Activated CD4-positive, alpha-beta memory T cell treated with anti-CD3 and anti-CD28 coated beads for 36 hours (primary cell): ENCODE measurements at regions of chrX and their contacts with region 1.

Region 1: DNA sequence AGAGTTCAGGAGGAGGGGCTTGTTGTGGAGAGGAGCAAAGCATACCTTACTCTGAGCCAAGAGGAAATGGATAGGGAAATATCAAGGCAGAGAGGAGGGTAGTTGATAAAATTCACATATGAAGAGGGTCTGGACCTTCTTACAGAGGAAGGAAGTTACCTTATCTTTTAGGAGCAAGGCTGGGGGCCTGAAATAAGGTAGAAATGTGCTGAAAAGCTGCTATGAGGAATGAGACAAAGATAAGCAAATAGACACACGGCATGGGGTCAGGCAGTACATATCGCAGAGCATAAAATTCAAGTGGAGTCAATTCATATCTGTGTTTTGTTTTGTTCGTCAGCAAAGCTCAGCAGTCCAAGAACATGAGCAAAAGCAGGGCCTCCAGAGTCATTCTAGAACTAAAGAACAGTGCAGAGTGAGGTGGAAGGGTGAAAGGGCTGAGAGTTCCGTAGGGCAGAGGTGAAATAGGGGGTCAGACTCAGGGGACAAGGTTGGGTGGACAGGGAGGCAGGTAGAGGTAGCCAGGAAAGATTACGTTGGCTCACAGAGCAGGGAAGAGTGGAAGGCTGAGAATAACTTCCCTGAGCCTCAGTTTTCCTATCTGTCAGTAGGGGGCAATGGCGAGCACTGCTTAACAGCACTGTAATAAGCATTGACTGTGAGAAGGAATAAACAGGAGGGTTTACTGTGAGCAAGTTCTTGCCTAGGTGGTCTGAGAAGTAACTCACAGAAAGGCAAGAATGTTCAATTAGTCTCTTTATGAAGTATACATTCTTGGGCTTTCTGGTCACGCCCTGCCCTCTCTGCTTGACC is 9.2 kb downstream of the VSIG4 start:
- DNase-seq: peak; percentile 29
- H3K4me3 Mint-ChIP-seq: no peak overlapping the region
- H3K27ac Mint-ChIP-seq: no peak overlapping the region
- H3K4me1 Mint-ChIP-seq: no peaks in the 10 kb centered on the region
- H3K27me3 Mint-ChIP-seq: no peaks in the 10 kb centered on the region

Region 2: DNA sequence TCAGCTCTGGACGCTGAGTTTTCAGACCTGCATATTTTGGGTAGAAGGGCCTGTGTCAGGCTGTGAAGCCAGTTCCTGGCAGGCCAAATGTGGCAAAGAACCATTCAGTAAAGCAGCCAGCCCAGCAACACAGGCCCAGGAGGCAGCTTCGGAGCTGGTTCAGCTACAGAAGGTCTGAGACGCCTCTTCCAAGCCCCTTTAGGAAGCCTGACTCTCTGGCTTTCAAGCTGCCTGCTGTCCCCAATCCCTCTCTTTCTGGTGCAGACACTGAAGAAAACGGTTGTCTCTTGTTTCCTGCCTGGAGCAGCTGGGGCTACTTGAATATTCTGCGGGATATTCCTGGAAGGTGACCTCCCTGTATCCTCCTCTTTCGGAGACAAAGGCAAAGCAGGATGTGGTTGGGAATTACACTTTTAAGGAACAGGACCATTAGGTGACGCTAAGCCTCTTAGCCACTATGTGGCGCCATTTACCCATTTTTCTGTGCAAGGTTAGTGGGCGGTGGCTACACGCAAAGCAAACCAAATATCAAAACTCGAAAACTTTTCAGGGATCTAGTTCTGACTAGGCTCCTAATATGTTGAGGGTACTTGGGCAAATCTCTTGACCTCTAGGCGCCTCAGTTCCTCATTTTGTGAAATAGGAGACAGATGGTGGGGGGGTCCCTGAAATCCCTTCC is 448.9 kb before region 1 on chrX:
- CTCF ChIA-PET with region 1: interaction called, 14 read pairs
- POLR2A ChIA-PET with region 1: no interaction called
- intact Hi-C with region 1: no loop called
- DNase-seq: peak; percentile 63
- H3K4me3 Mint-ChIP-seq: no peak overlapping the region
- H3K27ac Mint-ChIP-seq: no peak overlapping the region
- H3K4me1 Mint-ChIP-seq: peaks cover 3% of the 10 kb centered on the region
- H3K27me3 Mint-ChIP-seq: no peaks in the 10 kb centered on the region

Region 3: DNA sequence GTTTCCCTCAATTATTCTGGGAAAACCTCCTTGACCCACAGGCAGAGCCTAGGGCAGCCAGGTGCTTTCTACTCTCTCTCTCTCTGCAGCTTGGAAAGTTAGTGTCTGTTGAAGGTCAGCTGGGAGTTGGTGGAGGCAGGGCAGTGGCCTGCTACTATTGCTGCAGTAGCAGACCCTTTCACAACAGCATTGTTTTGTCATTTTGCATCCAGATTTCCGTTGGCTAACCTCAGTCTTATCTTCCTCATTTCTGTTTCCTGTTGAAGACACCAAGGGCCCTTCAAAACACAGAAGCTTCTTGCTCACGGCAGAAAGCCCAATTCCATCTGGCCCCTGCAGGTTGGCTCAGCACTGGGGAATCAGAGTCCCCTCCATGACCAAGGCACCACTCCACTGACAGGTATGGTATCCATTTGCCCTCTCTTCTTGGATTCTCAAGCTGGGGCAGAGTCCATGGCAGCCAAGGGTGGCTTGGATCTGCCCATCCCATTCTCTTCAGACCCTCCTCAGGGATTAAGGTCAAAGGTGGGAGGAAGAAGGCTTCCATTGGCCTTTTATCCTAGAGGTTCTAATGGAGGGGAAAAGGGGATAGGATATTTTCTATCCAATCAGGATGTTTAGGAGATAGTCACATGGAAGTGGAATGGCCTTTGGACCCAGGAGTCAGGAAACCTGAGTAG is 15.4 kb before region 1 on chrX:
- CTCF ChIA-PET with region 1: interaction called, 18 read pairs
- POLR2A ChIA-PET with region 1: no interaction called
- intact Hi-C with region 1: no loop called
- DNase-seq: peak; percentile 17
- H3K4me3 Mint-ChIP-seq: no peak overlapping the region
- H3K27ac Mint-ChIP-seq: peak overlapping the region; percentile 28
- H3K4me1 Mint-ChIP-seq: peaks cover 68% of the 10 kb centered on the region
- H3K27me3 Mint-ChIP-seq: no peaks in the 10 kb centered on the region

Region 4: DNA sequence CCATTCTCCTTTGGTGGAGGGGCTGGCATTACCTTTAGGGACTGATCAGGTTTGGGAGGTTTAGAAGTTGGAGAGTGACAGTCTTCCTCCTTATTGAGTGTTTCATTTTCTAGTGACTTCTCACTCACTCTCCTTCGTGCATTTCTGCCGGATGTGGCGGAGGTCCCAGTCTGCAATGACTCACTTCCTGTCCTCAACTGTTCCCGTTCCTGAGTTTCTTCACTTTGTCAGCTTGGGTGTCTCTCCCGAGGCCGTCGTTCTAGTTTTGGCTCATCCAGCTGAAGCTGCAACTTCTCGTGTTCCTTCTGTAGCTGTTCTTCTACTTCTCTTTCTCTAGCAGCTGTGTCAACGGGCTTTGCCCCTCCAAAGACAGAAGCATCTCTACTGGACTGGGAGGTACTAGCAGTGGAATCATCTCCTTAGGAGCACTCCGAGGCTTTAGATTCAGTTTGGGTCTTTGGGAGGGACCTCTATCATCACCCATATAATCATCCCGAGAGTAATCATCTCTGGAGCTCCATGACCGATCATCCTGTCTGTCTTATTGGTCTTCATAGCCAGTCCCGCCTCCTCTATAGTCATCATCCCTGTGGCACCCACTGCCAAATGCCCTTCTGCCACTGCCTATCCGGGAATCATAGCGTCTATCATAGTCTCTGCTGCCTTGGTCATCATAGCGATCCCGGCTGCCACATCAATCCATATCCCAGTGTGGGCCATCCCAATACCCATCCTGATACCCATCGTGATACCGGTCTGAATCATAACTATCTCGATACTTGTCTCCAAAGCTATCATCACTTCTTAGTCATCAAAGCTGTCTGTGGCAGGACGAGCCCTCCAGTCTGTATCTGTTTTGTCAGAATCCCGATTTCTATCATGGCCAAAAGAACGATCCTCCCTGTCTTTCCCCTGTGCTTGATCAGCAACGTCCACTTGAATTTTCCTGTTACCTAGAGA is 44.5 kb after region 1 on chrX:
- CTCF ChIA-PET with region 1: no interaction called
- POLR2A ChIA-PET with region 1: no interaction called
- intact Hi-C with region 1: loop called (anchors 5 kb)
- DNase-seq: peak; percentile 70
- H3K4me3 Mint-ChIP-seq: peak overlapping the region; percentile 40
- H3K27ac Mint-ChIP-seq: peak overlapping the region; percentile 76
- H3K4me1 Mint-ChIP-seq: peaks cover 26% of the 10 kb centered on the region
- H3K27me3 Mint-ChIP-seq: no peaks in the 10 kb centered on the region

Region 5: DNA sequence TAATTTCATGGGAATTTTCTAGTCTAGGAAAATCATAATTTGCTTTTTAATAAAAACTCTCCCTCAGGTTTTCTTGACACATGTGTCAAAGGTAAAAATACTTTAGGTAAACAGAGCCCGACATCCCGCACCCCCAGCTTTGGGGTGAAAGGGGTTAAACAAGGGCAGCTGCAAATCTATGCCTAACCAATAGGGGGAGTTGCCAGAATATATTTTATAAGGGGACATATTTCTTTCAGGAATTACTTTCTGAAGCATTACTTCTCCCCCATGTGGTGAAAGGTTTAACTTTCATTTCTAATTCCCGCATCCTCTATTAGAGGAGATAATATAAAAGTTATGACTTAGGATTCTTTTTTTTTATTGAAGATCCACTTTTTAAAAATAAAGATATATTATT is 79.4 kb after region 1 on chrX:
- CTCF ChIA-PET with region 1: interaction called, 18 read pairs
- POLR2A ChIA-PET with region 1: no interaction called
- intact Hi-C with region 1: loop called (anchors 1 kb)
- DNase-seq: peak; percentile 9
- H3K4me3 Mint-ChIP-seq: no peak overlapping the region
- H3K27ac Mint-ChIP-seq: no peak overlapping the region
- H3K4me1 Mint-ChIP-seq: no peaks in the 10 kb centered on the region
- H3K27me3 Mint-ChIP-seq: no peaks in the 10 kb centered on the region